K562 (cell line): ENCODE measurements at regions of chr1 and their contacts with region 1.

Region 1: DNA sequence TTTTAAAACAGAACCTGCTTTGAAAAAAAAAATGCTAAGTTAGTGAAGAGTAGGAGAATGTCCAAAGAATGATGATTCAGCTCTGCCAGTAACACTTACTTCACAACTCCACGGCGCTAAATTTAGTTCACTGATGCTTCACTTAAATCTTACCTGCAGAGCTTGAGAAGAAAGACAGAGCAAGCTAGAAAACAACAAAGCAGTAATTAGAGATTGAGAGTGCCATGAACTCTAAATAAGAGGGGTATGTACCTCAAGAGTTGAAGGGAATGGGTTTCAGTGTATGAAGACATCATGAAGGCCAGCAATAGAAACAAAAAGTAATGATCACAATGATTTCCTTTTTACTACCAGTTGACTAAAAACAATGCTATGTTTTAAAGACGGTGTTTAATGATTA is 32.8 kb downstream of the EPRS1 start:
- DNase-seq: no peak
- ATAC-seq: no peak
- H3K4me3 ChIP-seq: no peak overlapping the region
- H3K27ac ChIP-seq: no peak overlapping the region
- H3K4me1 ChIP-seq: no peaks in the 10 kb centered on the region
- H3K27me3 ChIP-seq: no peaks in the 10 kb centered on the region
- CTCF ChIP-seq: no peak
- EP300 ChIP-seq: no peak
- POLR2A ChIP-seq: no peak
- RAD21 ChIP-seq: no peak

Region 2: GRCh38 chr1:219999821-220000220 is 13.7 kb before region 1 on chr1:
- CTCF ChIA-PET with region 1: no interaction called
- POLR2A ChIA-PET with region 1: interaction called, 47 read pairs
- in situ Hi-C with region 1: no loop called
- intact Hi-C with region 1: no loop called
- DNase-seq: no peak
- ATAC-seq: no peak
- H3K4me3 ChIP-seq: no peak overlapping the region
- H3K27ac ChIP-seq: no peak overlapping the region
- H3K4me1 ChIP-seq: no peaks in the 10 kb centered on the region
- H3K27me3 ChIP-seq: no peaks in the 10 kb centered on the region
- CTCF ChIP-seq: no peak
- EP300 ChIP-seq: no peak
- POLR2A ChIP-seq: no peak
- RAD21 ChIP-seq: no peak

Region 3: GRCh38 chr1:220028346-220028895 is 14.9 kb after region 1 on chr1:
- CTCF ChIA-PET with region 1: no interaction called
- POLR2A ChIA-PET with region 1: interaction called, 10 read pairs
- in situ Hi-C with region 1: no loop called
- intact Hi-C with region 1: no loop called
- DNase-seq: no peak
- ATAC-seq: no peak
- H3K4me3 ChIP-seq: no peak overlapping the region
- H3K27ac ChIP-seq: no peak overlapping the region
- H3K4me1 ChIP-seq: no peaks in the 10 kb centered on the region
- H3K27me3 ChIP-seq: no peaks in the 10 kb centered on the region
- CTCF ChIP-seq: no peak
- EP300 ChIP-seq: no peak
- POLR2A ChIP-seq: no peak
- RAD21 ChIP-seq: no peak